HCT116 (cell line): ENCODE measurements at regions of chr2 and their contacts with region 1.

Region 1: GRCh38 chr2:68362069-68362468 is 3.0 kb upstream of the PLEK start:
- DNase-seq: peak; percentile 65
- ATAC-seq: peak; percentile 77
- H3K4me3 ChIP-seq: no peak overlapping the region
- H3K27ac ChIP-seq: no peak overlapping the region
- H3K4me1 ChIP-seq: peaks cover 0 to 4% of the 10 kb centered on the region in 2 experiments; a peak in 2 of 4 replicates
- H3K27me3 ChIP-seq: no peaks in the 10 kb centered on the region
- CTCF ChIP-seq: peak; percentile 69 to 84 (median 78); a peak in 5 of 6 replicates
- POLR2A ChIP-seq: no peak
- RAD21 ChIP-seq: peak; percentile 60

Region 2: GRCh38 chr2:68169297-68169696 is 192.8 kb before region 1 on chr2:
- CTCF ChIA-PET with region 1: no interaction called
- POLR2A ChIA-PET with region 1: no interaction called
- RAD21 ChIA-PET with region 1: no interaction called
- intact Hi-C with region 1: no loop called
- DNase-seq: no peak
- ATAC-seq: peak; percentile 78
- H3K4me3 ChIP-seq: no peak overlapping the region
- H3K27ac ChIP-seq: no peak overlapping the region
- H3K4me1 ChIP-seq: no peaks in the 10 kb centered on the region
- H3K27me3 ChIP-seq: no peaks in the 10 kb centered on the region
- CTCF ChIP-seq: peak in 2 of 3 experiments; percentile 19 to 33; a peak in 3 of 6 replicates
- POLR2A ChIP-seq: no peak
- RAD21 ChIP-seq: no peak

Region 3: DNA sequence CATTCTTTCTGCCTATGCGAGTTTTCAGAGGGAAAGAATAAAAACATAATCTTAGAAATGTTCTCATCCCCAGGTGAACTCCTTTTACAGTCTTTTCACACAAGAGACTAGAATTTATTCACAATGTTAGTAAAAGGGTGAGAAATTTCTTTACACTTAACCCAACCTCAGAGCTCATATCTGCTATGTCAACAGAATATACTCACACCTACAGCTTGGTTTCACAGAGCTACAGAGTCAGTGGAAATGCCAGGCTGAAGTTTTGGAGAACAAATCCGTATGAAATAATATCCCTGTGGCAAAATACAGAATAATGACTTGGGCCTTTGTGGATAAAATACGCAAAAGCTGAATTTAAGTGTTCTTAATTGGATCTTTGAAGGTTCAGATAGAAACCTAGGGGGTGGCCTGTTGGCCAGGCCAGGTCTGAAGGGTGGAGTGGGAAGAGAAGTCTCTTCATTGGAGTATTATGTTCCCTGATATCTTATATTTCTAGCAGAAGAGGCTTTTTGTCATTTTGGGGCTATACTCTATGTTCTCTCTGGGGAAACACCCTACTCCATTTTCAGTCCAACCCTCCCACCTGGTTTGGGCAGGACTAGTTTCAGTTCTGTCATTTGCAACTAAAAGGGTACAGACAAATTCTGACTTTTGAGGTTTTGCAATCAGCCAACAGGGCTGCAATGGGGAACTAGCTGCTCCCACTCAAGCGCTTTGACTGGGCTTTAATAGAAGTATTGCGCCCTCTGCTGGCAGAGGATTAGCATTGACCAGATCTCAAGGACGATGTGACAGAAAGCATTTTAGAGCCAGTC is 79.3 kb after region 1 on chr2:
- CTCF ChIA-PET with region 1: interaction called, 6 read pairs
- POLR2A ChIA-PET with region 1: no interaction called
- RAD21 ChIA-PET with region 1: interaction called in 1 of 2 experiments, 3 read pairs
- intact Hi-C with region 1: loop called (anchors 1 kb)
- DNase-seq: peak; percentile 82
- ATAC-seq: peak; percentile 98
- H3K4me3 ChIP-seq: no peak overlapping the region
- H3K27ac ChIP-seq: no peak overlapping the region
- H3K4me1 ChIP-seq: peaks cover 0 to 4% of the 10 kb centered on the region in 2 experiments; a peak in 1 of 4 replicates
- H3K27me3 ChIP-seq: no peaks in the 10 kb centered on the region
- CTCF ChIP-seq: peak; percentile 82 to 95 (median 84)
- POLR2A ChIP-seq: no peak
- RAD21 ChIP-seq: peak; percentile 83